Activated naive CD4-positive, alpha-beta T cell treated with anti-CD3 and anti-CD28 coated beads for 36 hours (primary cell): ENCODE measurements at regions of chr19 and their contacts with region 1.

Region 1: GRCh38 chr19:50300814-50301606 is 28.2 kb downstream of the KCNC3 start:
- DNase-seq: peak; percentile 55
- H3K4me3 Mint-ChIP-seq: no peak overlapping the region
- H3K27ac Mint-ChIP-seq: no peak overlapping the region
- H3K4me1 Mint-ChIP-seq: peaks cover 16% of the 10 kb centered on the region
- H3K27me3 Mint-ChIP-seq: peaks cover 26% of the 10 kb centered on the region

Region 2: GRCh38 chr19:50244695-50245094 is 56.3 kb before region 1 on chr19:
- CTCF ChIA-PET with region 1: no interaction called
- intact Hi-C with region 1: no loop called
- DNase-seq: no peak
- H3K4me3 Mint-ChIP-seq: no peak overlapping the region
- H3K27ac Mint-ChIP-seq: no peak overlapping the region
- H3K4me1 Mint-ChIP-seq: no peaks in the 10 kb centered on the region
- H3K27me3 Mint-ChIP-seq: peaks cover 6% of the 10 kb centered on the region

Region 3: GRCh38 chr19:50315773-50316448 is 14.9 kb after region 1 on chr19:
- CTCF ChIA-PET with region 1: interaction called, 3 read pairs
- intact Hi-C with region 1: loop called (anchors 2 kb)
- DNase-seq: peak; percentile 70
- H3K4me3 Mint-ChIP-seq: no peak overlapping the region
- H3K27ac Mint-ChIP-seq: no peak overlapping the region
- H3K4me1 Mint-ChIP-seq: peaks cover 14% of the 10 kb centered on the region
- H3K27me3 Mint-ChIP-seq: peaks cover 54% of the 10 kb centered on the region